ENCODE measurements at regions of chr5 and their contacts with region 1.

Region 1: DNA sequence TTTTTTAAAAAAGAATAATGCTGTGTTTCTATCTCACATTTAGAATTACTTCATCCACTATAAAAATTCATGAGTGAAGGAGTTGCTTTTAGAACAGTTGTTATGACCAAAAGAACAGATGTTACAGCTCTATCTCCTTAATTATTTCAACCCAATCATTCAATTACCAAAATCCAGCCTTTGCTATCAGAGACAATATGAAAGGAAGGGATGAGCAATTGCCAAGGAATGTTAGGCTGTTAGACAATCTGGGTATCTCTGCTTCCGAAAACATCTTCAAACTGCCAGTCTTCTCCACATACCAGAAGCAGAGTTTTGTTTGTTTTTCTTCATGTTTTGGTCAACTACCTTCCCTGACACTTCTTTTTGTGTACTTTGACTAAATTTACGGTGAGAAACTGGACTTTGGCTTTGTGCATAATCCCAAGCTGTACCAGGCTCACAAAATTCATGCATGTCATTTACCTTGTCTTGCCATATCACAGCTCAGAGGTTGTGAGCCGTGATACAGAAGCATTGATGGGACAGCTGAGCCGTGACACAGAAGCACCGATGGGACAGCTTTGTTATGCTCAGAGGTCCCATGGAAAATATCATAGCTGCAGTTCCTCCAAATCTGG is 405.5 kb downstream of the KIF4B start:
- DNase-seq: no peak
- H3K4me3 ChIP-seq: no peak overlapping the region
- H3K27ac ChIP-seq: no peak overlapping the region
- H3K4me1 ChIP-seq: no peaks in the 10 kb centered on the region
- H3K27me3 ChIP-seq: no peaks in the 10 kb centered on the region
- CTCF ChIP-seq: no peak
- EP300 ChIP-seq: no peak
- POLR2A ChIP-seq: no peak

Region 2: GRCh38 chr5:153777681-153778581 is 1641.1 kb before region 1 on chr5:
- in situ Hi-C with region 1: no loop called
- intact Hi-C with region 1: no loop called
- DNase-seq: no peak
- H3K4me3 ChIP-seq: no peak overlapping the region
- H3K27ac ChIP-seq: no peak overlapping the region
- H3K4me1 ChIP-seq: no peaks in the 10 kb centered on the region
- H3K27me3 ChIP-seq: no peaks in the 10 kb centered on the region
- CTCF ChIP-seq: no peak
- EP300 ChIP-seq: no peak
- POLR2A ChIP-seq: no peak

Region 3: DNA sequence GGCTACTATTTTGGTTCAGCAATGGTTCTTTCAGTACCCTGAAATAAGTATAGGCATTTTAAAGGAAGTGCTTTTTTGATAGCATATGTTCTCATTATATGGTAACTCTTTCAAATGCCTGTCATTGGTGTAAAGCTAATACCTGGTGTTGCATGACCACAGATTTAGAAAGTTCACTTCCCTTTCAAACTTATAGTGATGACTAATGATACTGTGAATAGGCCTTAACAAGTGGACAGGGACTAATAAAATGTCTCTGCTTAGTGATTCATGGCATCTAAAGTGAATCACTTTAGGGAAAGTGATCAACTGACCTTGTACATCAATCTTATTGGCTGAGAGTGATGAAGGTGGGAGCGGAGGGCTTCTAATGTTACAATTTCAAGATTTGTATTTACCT is 456.6 kb before region 1 on chr5:
- in situ Hi-C with region 1: no loop called
- intact Hi-C with region 1: loop called (anchors 5 kb)
- DNase-seq: no peak
- H3K4me3 ChIP-seq: no peak overlapping the region
- H3K27ac ChIP-seq: no peak overlapping the region
- H3K4me1 ChIP-seq: no peaks in the 10 kb centered on the region
- H3K27me3 ChIP-seq: no peaks in the 10 kb centered on the region
- CTCF ChIP-seq: no peak
- EP300 ChIP-seq: no peak
- POLR2A ChIP-seq: no peak

Region 4: DNA sequence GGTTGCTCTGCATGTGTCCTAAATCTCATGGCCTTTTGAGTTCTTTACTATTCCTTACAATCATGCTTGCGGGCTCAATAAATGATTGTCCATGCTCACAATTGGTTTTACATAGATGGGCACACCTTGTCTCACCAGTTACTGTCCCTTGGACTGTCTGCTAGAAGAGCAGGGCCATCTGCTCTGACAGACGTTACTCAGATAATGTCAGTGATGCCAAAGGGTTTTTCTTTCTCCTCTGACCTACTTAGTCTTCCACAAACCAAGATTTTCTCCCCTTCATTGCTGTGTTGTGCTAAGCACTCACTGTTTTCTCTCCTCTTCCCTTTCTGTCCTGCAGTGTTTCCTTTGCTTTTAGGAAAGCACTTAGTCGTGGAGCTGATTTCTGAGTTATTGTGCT is 156.8 kb after region 1 on chr5:
- in situ Hi-C with region 1: no loop called
- intact Hi-C with region 1: no loop called
- DNase-seq: no peak
- H3K4me3 ChIP-seq: no peak overlapping the region
- H3K27ac ChIP-seq: no peak overlapping the region
- H3K4me1 ChIP-seq: no peaks in the 10 kb centered on the region
- H3K27me3 ChIP-seq: no peaks in the 10 kb centered on the region
- CTCF ChIP-seq: no peak
- EP300 ChIP-seq: no peak
- POLR2A ChIP-seq: no peak

Region 5: GRCh38 chr5:155665361-155665760 is 246.3 kb after region 1 on chr5:
- in situ Hi-C with region 1: no loop called
- intact Hi-C with region 1: no loop called
- DNase-seq: no peak
- H3K4me3 ChIP-seq: no peak overlapping the region
- H3K27ac ChIP-seq: no peak overlapping the region
- H3K4me1 ChIP-seq: no peaks in the 10 kb centered on the region
- H3K27me3 ChIP-seq: no peaks in the 10 kb centered on the region
- CTCF ChIP-seq: no peak
- EP300 ChIP-seq: no peak
- POLR2A ChIP-seq: no peak